Calu3 (cell line): ENCODE measurements at regions of chr3 and their contacts with region 1.

Region 1: DNA sequence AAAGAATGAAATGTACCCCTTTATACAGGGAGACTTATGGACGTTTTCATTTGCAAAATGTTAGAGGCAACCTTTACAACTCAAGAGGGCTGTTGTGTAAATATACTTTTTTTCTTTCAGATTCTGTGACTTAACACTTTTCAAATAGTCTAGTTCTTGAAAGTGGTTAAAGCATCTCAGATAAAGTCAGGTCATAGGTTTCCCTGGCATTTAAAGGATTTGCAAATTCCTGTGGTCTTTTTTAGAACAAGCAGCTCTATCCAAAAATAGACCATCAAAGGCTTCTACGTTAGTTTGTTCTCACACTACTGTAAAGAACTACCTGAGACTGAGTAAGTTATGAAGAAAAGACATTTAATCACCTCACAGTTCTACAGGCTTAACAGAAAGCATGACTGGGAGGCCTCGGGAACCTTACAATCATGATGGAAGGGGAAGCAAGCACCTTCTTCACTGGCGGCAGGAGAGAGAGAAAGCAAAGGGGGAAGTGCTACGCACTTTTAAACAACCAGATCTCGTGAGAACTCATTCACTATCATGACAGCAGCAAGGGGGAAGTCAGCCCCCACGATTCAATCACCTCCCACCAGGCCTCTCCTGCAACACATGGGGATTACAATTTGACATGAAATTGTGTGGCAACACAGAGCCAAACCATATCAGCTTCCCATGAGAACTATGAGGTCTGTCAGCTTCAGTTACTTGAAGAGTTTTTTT is 23.3 kb upstream of the GABRR3 start:
- DNase-seq: no peak
- H3K4me3 Mint-ChIP-seq: no peak overlapping the region
- H3K27ac Mint-ChIP-seq: no peak overlapping the region
- H3K4me1 Mint-ChIP-seq: no peaks in the 10 kb centered on the region
- H3K27me3 Mint-ChIP-seq: no peaks in the 10 kb centered on the region
- CTCF ChIP-seq: no peak

Region 2: DNA sequence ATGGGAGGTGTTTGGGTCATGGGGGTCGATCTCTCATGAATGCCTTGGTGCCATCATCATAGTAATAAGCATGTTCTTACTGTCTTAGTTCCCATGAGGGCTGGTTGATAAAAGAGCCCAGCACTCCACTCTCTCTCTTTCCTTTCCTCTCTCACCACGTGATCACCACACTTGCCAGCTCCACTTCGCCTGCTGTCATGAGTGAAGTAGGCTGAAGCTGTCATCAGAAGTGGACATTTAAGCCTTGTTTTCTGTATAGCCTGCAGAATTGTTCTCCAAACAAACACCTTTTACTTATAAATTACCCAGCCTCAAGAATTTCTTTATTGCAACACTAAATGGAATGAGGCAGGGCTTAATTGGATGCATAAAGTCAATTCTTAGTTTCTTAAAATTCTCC is 78.2 kb after region 1 on chr3:
- CTCF ChIA-PET with region 1: no interaction called
- intact Hi-C with region 1: no loop called
- DNase-seq: no peak
- H3K4me3 Mint-ChIP-seq: no peak overlapping the region
- H3K27ac Mint-ChIP-seq: no peak overlapping the region
- H3K4me1 Mint-ChIP-seq: no peaks in the 10 kb centered on the region
- H3K27me3 Mint-ChIP-seq: peaks cover 5% of the 10 kb centered on the region
- CTCF ChIP-seq: no peak

Region 3: GRCh38 chr3:98483130-98483482 is 424.7 kb after region 1 on chr3:
- CTCF ChIA-PET with region 1: no interaction called
- intact Hi-C with region 1: loop called (anchors 5 kb)
- DNase-seq: peak; percentile 35
- H3K4me3 Mint-ChIP-seq: no peak overlapping the region
- H3K27ac Mint-ChIP-seq: peak overlapping the region; percentile 57
- H3K4me1 Mint-ChIP-seq: peaks cover 9% of the 10 kb centered on the region
- H3K27me3 Mint-ChIP-seq: no peaks in the 10 kb centered on the region
- CTCF ChIP-seq: no peak